Ascending aorta (tissue), 2 donors: ENCODE measurements at regions of chr6 and their contacts with region 1.

Region 1: DNA sequence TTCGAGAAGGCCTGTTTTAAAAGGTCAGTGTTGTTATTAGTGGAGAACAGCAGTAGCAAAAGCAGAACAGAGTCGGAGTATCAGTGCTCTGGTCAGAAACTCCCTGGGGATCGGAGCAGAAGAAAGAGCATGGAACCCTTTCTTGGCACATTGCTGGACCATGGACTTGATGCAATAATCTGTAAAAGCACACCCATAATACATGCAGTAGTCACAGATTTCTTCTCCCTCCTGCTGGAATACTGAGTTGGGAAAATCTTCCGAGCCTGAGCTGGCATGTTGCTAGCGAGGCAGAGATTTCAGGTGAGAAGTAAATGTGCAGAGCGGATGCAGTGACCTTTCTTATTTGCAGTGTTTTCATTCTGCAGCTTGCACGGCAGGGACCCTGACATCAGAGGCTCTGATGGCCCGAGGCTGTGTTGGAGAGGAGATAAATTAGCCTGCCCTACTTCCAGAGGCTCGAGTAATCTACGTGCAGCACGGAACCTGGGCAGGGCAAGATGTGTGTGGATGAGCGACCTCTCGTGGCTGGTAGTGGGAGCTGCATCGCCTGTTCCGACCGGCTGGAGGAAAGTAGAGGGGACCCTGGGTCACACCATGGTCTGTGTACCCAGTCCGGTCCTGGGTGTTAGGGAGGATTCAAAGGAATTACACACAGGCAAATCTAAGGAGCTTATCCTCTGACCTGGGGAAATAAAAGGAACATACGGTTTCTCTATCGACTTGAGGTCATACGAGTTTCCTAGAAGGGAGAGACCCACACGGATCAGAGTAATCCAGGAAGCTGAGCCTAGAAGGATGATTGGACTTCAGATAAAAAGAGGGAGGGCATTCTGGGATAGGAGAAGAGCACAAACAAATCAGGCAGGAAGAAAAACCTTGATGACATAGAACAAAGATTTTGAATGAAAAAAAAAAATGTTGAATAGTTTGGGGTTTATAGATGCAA is 137.0 kb upstream of the STMND1 start:
- DNase-seq: peak in 1 of 2 donors; percentile 71
- H3K4me3 ChIP-seq: no peak overlapping the region
- H3K27ac ChIP-seq: no peak overlapping the region
- H3K4me1 ChIP-seq: peaks cover 0 to 3% of the 10 kb centered on the region in 2 donors
- H3K27me3 ChIP-seq: no peaks in the 10 kb centered on the region
- CTCF ChIP-seq: peak; percentile 74 to 90 (median 87)

Region 2: GRCh38 chr6:16089232-16090062 is 875.4 kb before region 1 on chr6:
- intact Hi-C with region 1: no loop called
- DNase-seq: no peak
- H3K4me3 ChIP-seq: no peak overlapping the region
- H3K27ac ChIP-seq: no peak overlapping the region
- H3K4me1 ChIP-seq: no peaks in the 10 kb centered on the region
- H3K27me3 ChIP-seq: no peaks in the 10 kb centered on the region
- CTCF ChIP-seq: no peak

Region 3: DNA sequence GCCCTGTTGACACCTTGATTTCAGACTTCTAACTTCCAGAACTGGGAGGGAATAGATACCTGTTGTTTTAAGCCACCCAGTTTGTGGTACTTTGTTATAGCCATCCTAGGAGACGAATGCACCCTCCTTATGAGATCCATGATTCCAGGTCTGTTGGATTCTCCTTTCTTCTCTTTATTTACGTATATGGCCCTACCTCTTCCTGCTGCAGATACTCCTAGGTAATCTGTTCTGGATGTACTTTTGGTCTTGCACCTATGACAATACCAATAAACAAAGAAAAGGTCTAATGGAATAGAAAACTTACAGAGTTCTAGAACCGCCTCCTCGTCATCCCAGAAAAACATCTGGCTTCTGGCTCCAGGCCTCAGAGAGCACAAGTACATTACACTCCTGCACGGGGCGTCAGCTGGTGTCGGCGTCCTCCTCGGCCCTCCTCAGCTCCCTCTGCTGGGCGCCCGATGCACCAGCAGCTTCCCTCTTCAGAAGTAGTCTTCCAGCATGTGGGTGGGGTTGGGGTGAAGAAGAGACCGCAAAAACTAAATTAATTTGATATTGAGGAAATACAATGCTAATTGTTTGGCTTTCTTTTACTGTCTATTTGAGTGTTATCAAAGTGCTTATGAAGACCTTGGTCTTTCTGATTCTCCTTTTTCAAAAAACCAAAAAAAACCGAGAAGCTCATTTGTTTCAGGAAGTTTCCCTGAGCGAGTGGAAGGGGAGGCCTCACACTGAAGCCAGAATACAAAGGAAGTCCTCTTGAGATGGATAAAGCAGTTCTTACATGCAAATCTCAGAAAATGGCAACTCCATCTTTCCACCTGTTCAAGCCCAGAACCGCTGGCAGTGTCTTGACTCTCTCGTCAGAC is 193.9 kb before region 1 on chr6:
- intact Hi-C with region 1: loop called (anchors 10 kb)
- DNase-seq: peak; percentile 22 to 86
- H3K4me3 ChIP-seq: no peak overlapping the region
- H3K27ac ChIP-seq: peak overlapping the region; percentile 32 to 51
- H3K4me1 ChIP-seq: peaks cover 6 to 25% of the 10 kb centered on the region in 2 donors
- H3K27me3 ChIP-seq: no peaks in the 10 kb centered on the region
- CTCF ChIP-seq: peak; percentile 79 to 90 (median 87)

Region 4: DNA sequence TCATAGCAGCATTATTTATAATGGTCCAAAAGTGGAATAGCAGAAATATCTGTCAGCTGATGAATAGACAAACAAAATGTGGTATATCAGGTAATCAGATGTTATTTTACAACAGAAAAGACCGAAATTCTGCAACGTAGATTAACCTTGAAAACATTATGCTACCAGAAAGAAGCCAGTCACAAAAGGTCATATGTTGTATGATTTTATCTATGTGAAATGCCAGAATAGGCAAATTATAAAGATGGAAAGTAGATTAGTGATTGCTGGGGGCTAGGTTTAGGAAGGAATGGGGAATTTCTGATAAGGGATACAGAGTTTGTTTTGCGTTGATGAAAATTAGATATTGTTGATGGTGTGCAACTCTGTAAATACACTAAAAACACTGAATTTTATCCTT is 27.9 kb before region 1 on chr6:
- intact Hi-C with region 1: no loop called
- DNase-seq: no peak
- H3K4me3 ChIP-seq: no peak overlapping the region
- H3K27ac ChIP-seq: no peak overlapping the region
- H3K4me1 ChIP-seq: no peaks in the 10 kb centered on the region
- H3K27me3 ChIP-seq: no peaks in the 10 kb centered on the region
- CTCF ChIP-seq: no peak

Region 5: DNA sequence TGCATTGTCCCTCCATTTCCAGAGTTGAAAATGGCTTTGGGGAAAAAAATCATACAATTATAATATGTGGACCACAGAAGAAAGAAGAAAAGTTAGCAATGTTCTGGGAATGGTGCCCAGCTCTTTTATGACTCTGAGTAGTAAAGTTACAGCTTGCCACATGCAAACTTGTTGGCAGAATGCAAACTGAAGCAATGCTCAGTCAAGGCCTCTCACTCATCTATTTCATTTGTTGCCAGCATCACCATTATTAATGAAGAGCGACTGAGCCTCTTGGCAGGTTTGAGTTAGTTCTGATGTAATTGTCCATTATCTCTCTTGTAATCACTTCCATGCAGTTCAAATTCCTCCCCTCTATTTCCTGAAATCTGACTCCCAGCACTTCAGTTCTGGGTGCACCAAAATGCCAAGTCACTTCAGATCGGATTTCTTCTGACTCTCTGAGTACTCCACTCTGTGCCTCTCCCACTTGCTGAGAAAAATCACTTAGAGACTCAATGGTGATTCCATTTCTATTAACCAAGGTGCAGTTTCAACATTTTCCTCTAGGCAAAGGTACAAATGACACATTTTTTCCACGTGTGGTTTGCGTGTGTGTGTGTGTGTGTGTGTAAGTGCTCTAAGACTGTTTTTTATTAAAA is 17.3 kb before region 1 on chr6:
- intact Hi-C with region 1: no loop called
- DNase-seq: no peak
- H3K4me3 ChIP-seq: no peak overlapping the region
- H3K27ac ChIP-seq: peak overlapping the region in 1 of 2 donors; percentile 2
- H3K4me1 ChIP-seq: peaks cover 0 to 2% of the 10 kb centered on the region in 2 donors
- H3K27me3 ChIP-seq: no peaks in the 10 kb centered on the region
- CTCF ChIP-seq: no peak